ENCODE measurements at regions of chr6 and their contacts with region 1.

Region 1: GRCh38 chr6:72622094-72622940 is 453 bp downstream of the KCNQ5 start:
- DNase-seq: peak; percentile 72
- ATAC-seq: peak; percentile 54
- H3K4me3 Mint-ChIP-seq: peak overlapping the region; percentile 96
- H3K27ac Mint-ChIP-seq: peak overlapping the region; percentile 93
- H3K4me1 Mint-ChIP-seq: peaks cover 52% of the 10 kb centered on the region
- H3K27me3 Mint-ChIP-seq: no peaks in the 10 kb centered on the region
- CTCF ChIP-seq: no peak

Region 2: GRCh38 chr6:72689107-72689954 is 67.0 kb after region 1 on chr6:
- CTCF ChIA-PET with region 1: interaction called, 3 read pairs
- POLR2A ChIA-PET with region 1: interaction called, 13 read pairs
- intact Hi-C with region 1: loop called (anchors 1 kb)
- DNase-seq: no peak
- ATAC-seq: peak; percentile 100
- H3K4me3 Mint-ChIP-seq: peak overlapping the region; percentile 76
- H3K27ac Mint-ChIP-seq: peak overlapping the region; percentile 82
- H3K4me1 Mint-ChIP-seq: peaks cover 13% of the 10 kb centered on the region
- H3K27me3 Mint-ChIP-seq: no peaks in the 10 kb centered on the region
- CTCF ChIP-seq: no peak

Region 3: DNA sequence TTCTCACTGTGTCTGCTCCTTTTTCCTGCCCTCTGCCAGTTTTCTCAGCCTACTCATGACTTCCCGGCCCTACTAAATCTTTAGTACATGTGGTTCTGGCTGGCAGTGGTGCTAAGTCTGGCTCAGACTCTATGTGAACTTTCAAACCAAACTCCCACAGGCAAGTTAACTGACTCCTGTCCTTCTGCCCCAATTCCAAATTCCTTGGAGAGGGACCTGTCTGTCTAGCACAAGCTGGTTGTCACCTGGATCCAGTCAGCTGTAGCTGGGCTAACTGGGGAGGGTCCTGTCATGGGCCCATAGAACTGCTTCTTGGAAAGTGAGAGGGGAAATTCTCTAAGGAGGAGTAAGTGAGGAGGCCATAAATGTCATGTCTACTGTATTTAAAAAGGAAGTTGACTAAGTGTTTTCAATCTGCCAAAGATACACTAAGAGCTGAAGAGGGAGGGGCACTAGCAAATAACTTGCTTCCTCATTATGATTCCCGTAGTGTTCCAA is 239.7 kb after region 1 on chr6:
- CTCF ChIA-PET with region 1: no interaction called
- POLR2A ChIA-PET with region 1: no interaction called
- intact Hi-C with region 1: loop called (anchors 2 kb)
- DNase-seq: no peak
- ATAC-seq: no peak
- H3K4me3 Mint-ChIP-seq: peak overlapping the region; percentile 11
- H3K27ac Mint-ChIP-seq: peak overlapping the region; percentile 42
- H3K4me1 Mint-ChIP-seq: peaks cover 7% of the 10 kb centered on the region
- H3K27me3 Mint-ChIP-seq: no peaks in the 10 kb centered on the region
- CTCF ChIP-seq: no peak

Region 4: DNA sequence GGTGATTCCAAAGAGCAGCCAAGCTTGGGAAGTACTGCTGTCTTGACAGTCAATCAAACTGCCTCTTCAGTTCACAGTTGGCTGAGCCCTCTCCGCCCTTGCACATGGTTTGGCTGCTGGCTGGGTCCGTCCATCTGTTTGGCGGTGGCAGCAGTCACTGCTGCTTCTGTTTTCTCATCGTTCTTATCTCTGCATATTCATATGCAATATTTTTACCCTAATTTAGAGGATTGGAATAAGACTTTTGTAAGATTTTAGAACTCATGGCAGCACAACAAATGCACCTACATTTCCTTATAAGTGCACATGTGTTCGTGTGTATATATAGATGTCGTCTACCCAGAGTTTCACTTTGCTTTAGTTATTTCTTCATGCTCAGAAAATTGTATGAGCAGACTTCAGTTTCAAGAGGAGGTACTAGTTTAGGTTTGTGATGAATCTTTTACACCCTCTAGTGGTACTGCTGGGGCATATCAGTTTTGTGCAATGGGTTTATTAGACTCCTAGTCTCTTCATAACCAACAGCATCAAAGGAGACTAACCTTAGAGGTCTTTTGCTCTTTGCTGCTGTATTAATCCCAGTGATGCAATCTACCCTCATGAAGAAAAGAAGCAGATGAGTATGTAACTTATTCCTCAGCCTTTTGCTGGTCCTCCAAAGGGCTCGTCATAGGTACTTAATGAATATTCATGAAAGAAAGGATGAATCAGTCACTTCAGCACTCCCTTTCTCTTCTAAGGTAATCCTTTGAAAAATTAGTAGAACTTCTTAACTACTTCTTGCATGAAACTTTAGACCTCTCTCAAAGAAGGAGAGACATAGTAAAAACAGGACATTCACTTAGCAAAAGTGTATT is 558.7 kb after region 1 on chr6:
- CTCF ChIA-PET with region 1: interaction called, 27 read pairs
- POLR2A ChIA-PET with region 1: interaction called, 7 read pairs
- intact Hi-C with region 1: loop called (anchors 1 kb)
- DNase-seq: no peak
- ATAC-seq: peak; percentile 93
- H3K4me3 Mint-ChIP-seq: peak overlapping the region; percentile 69
- H3K27ac Mint-ChIP-seq: peak overlapping the region; percentile 33
- H3K4me1 Mint-ChIP-seq: peaks cover 14% of the 10 kb centered on the region
- H3K27me3 Mint-ChIP-seq: no peaks in the 10 kb centered on the region
- CTCF ChIP-seq: peak; percentile 34

Region 5: GRCh38 chr6:73451223-73452107 is 829.1 kb after region 1 on chr6:
- CTCF ChIA-PET with region 1: no interaction called
- POLR2A ChIA-PET with region 1: no interaction called
- intact Hi-C with region 1: loop called (anchors 5 kb)
- DNase-seq: peak; percentile 54
- ATAC-seq: peak; percentile 59
- H3K4me3 Mint-ChIP-seq: peak overlapping the region; percentile 93
- H3K27ac Mint-ChIP-seq: peak overlapping the region; percentile 91
- H3K4me1 Mint-ChIP-seq: peaks cover 22% of the 10 kb centered on the region
- H3K27me3 Mint-ChIP-seq: no peaks in the 10 kb centered on the region
- CTCF ChIP-seq: no peak

Measured in activated B cell treated with CpG ODN at 0.5 μM for 24 hours (primary cell).